PC-3 (cell line): ENCODE measurements at regions of chr9 and their contacts with region 1.

Region 1: GRCh38 chr9:127396808-127397497 is at the start of gene SLC2A8:
- DNase-seq: peak; percentile 99
- ATAC-seq: peak; percentile 91
- H3K4me3 ChIP-seq: peak within 1 kb of the TSS; percentile 82
- H3K27ac ChIP-seq: no peak within 1 kb of the TSS
- H3K4me1 ChIP-seq: peaks cover 14% of the 10 kb centered on the region
- H3K27me3 ChIP-seq: no peaks in the 10 kb centered on the region
- CTCF ChIP-seq: 0 out of 2 replicates have a peak, but pooled peaks have one; percentile 7
- total RNA-seq, gene SLC2A8: 29.0 and 43.7 TPM in 2 replicates

Region 2: DNA sequence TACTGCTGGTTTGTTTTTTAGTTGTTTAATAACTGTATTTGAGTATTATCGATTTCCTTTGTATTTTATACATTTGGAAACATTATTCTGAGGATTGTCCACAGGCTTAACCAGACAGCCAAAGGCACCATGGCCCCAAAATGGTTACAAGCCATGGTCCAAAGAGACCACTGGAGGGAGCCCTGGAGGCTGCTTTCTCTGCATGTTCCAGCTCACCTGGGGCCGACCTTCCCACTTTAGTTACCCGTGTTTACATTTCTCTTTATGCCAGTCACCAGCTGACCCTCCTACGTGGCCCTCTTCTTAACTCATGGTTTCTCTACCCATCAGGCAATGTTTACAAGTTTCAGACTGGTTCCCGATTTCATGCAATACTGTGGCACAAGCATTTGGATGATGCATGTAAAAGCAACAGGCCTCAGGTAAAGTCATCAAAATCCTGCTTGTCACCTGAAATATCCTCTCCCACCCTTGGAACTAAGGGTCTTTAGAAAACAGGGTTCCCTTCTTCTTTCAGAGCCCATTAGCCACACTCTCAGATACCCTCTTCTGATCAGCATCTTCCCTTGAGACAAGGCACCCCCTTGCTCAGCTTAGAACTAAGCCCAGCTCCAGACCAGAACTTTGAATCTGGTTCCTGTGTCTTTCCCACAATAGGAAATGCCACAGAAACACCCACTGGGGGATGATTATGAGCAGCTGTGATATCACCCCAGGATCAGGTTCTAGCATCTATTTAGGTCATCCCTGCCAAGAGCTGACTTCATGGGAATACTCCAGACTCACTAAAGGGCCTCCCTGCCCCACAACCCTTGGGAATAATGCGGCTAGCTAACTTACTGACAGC is 182.3 kb before region 1 on chr9:
- CTCF ChIA-PET with region 1: interaction called, 3 read pairs
- POLR2A ChIA-PET with region 1: no interaction called
- intact Hi-C with region 1: loop called (anchors 5 kb)
- DNase-seq: peak; percentile 78
- ATAC-seq: peak; percentile 74
- H3K4me3 ChIP-seq: no peak overlapping the region
- H3K27ac ChIP-seq: no peak overlapping the region
- H3K4me1 ChIP-seq: peaks cover 5% of the 10 kb centered on the region; the same call in 1 of the 2 replicates
- H3K27me3 ChIP-seq: no peaks in the 10 kb centered on the region
- CTCF ChIP-seq: peak; percentile 84

Region 3: DNA sequence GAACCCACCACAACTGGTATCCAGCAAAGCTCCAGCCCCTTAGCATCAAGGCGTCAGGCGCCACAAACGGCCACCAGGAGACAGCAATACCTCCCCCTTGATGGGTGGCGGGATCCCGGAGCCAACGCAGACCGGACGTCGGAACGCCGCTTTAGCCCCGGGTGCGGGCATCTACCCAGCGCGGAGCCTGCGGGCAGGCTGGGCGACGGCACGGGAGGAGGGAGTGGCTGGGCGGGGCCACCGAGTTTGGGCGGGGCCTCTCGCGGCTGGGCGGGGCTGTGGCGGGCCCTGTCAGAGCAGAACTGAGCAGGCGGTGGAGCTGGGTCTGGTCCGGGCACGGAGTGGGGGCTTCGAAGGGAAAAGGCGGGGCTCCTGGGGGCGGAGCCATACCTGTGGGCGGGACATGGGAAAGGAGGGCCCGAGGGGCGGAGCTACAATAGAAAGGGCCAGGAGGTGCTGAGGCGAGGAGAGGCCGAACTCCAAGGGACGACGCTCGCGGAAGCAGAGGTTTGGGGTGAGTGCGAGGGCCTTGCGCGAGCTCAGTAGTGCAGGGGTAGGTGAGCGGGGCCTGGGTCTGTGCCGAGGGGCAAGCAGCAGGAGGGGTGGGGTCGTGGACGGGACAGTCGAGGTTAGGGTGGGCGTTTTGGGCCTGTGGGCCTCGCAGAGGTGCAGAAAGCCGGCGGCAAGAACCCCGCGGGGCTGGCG is 172.6 kb before region 1 on chr9:
- CTCF ChIA-PET with region 1: no interaction called
- POLR2A ChIA-PET with region 1: no interaction called
- intact Hi-C with region 1: loop called (anchors 5 kb)
- DNase-seq: peak; percentile 89
- ATAC-seq: peak; percentile 80
- H3K4me3 ChIP-seq: peak overlapping the region; percentile 73
- H3K27ac ChIP-seq: 0 out of 2 replicates have a peak overlapping the region, but pooled peaks have one; percentile 34
- H3K4me1 ChIP-seq: peaks cover 6% of the 10 kb centered on the region; the same call in 1 of the 2 replicates
- H3K27me3 ChIP-seq: no peaks in the 10 kb centered on the region
- CTCF ChIP-seq: no peak

Region 4: GRCh38 chr9:127244609-127245601 is 152.0 kb before region 1 on chr9:
- CTCF ChIA-PET with region 1: no interaction called
- POLR2A ChIA-PET with region 1: no interaction called
- intact Hi-C with region 1: no loop called
- DNase-seq: peak; percentile 95
- ATAC-seq: peak; percentile 100
- H3K4me3 ChIP-seq: peak overlapping the region; percentile 80
- H3K27ac ChIP-seq: peak overlapping the region; percentile 21; the same call in 1 of the 2 replicates
- H3K4me1 ChIP-seq: peaks cover 10% of the 10 kb centered on the region
- H3K27me3 ChIP-seq: no peaks in the 10 kb centered on the region
- CTCF ChIP-seq: no peak

Region 5: GRCh38 chr9:127283917-127284316 is 113.0 kb before region 1 on chr9:
- CTCF ChIA-PET with region 1: interaction called, 5 read pairs
- POLR2A ChIA-PET with region 1: no interaction called
- intact Hi-C with region 1: loop called (anchors 1 kb)
- DNase-seq: peak; percentile 39
- ATAC-seq: peak; percentile 62
- H3K4me3 ChIP-seq: no peak overlapping the region
- H3K27ac ChIP-seq: no peak overlapping the region
- H3K4me1 ChIP-seq: no peaks in the 10 kb centered on the region
- H3K27me3 ChIP-seq: no peaks in the 10 kb centered on the region
- CTCF ChIP-seq: peak; percentile 55

Region 6: DNA sequence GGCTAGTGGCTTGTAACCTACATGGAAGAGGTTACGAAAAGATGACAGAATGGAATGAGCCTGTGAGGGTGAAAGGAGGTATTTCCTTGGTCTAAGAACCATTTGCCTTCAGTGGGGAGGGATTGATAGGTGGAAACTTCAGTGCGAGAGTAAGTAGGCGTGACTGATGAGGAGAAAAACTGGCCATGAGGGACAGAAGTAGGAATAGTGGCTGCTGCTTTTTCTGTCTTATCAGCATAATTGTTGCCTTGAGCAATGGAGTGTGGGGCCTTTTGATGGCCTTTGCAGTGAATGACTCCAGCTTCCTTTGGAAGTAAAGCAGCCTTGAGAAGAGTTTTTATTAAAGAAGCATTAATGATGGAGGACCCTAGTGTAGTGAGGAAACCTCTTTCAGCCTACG is 18.2 kb after region 1 on chr9:
- CTCF ChIA-PET with region 1: interaction called, 11 read pairs
- POLR2A ChIA-PET with region 1: no interaction called
- intact Hi-C with region 1: no loop called
- DNase-seq: no peak
- ATAC-seq: no peak
- H3K4me3 ChIP-seq: no peak overlapping the region
- H3K27ac ChIP-seq: no peak overlapping the region
- H3K4me1 ChIP-seq: peaks cover 34% of the 10 kb centered on the region
- H3K27me3 ChIP-seq: no peaks in the 10 kb centered on the region
- CTCF ChIP-seq: no peak